MCF 10A (cell line): ENCODE measurements at regions of chr15 and their contacts with region 1.

Region 1: GRCh38 chr15:78691167-78691872 is 50.3 kb upstream of the CHRNB4 start:
- DNase-seq: no peak
- H3K4me3 Mint-ChIP-seq: no peak overlapping the region
- H3K27ac Mint-ChIP-seq: no peak overlapping the region
- H3K4me1 Mint-ChIP-seq: no peaks in the 10 kb centered on the region
- H3K27me3 Mint-ChIP-seq: no peaks in the 10 kb centered on the region
- CTCF ChIP-seq: no peak

Region 2: GRCh38 chr15:78604420-78604819 is 86.9 kb before region 1 on chr15:
- CTCF ChIA-PET with region 1: no interaction called
- POLR2A ChIA-PET with region 1: no interaction called
- intact Hi-C with region 1: no loop called
- DNase-seq: no peak
- H3K4me3 Mint-ChIP-seq: no peak overlapping the region
- H3K27ac Mint-ChIP-seq: no peak overlapping the region
- H3K4me1 Mint-ChIP-seq: no peaks in the 10 kb centered on the region
- H3K27me3 Mint-ChIP-seq: peaks cover 42% of the 10 kb centered on the region
- CTCF ChIP-seq: no peak

Region 3: GRCh38 chr15:78638658-78639314 is 52.5 kb before region 1 on chr15:
- CTCF ChIA-PET with region 1: interaction called, 10 read pairs
- POLR2A ChIA-PET with region 1: interaction called, 3 read pairs
- intact Hi-C with region 1: no loop called
- DNase-seq: peak; percentile 72
- H3K4me3 Mint-ChIP-seq: no peak overlapping the region
- H3K27ac Mint-ChIP-seq: no peak overlapping the region
- H3K4me1 Mint-ChIP-seq: no peaks in the 10 kb centered on the region
- H3K27me3 Mint-ChIP-seq: no peaks in the 10 kb centered on the region
- CTCF ChIP-seq: peak; percentile 63